Head of caudate nucleus (tissue), 42 donors: ENCODE measurements at regions of chr4 and their contacts with region 1.

Region 1: DNA sequence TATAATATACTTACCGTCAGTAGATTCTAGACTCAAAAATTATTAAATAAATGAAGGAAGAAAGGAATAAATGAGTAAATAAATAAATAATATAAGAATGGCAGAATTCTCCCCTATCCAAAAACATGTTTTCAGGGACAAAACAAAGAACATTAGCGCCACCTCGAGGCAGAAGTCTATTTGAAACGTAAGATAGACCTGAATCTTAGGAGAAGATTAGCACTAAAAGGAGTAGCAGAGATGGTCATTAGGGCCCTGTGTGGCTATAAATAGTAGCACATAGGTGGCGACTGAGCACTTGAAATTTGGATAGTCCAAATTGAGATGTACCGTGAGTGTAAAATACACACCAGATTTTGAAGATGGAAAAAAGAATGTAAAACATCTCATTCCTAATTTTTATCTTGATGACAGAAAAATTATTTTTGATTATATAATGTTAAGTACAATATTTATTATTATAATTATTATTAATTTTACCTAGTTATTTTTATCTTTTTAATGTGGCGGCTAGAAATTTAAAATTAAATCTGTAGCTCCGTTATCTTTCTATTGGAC is 24.3 kb upstream of the SRD5A3 start:
- DNase-seq: peak in 39 of 42 donors; percentile 37 to 96 (median 80)

Region 2: DNA sequence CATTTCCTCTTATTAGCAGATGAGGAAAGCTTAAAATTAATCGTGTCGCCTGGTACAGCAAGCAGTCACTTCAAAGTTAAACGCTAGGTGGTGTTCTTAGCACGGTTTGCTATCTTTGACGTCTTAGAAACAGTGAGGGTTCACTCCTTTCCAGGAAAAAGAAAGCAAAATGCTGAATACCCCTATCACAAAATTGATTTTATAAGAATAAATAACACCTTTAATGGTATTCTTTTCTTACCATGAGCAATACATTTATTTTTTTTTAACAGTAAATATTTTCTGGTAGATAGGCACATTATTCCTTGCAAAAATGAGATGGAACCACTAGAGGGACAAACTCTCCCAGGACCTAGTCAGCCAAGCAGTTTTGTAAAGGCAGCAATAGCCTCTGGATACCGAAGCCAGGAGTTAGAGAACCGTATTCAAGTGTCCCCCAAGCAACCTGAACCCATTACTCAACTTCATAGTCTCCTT is 350.3 kb before region 1 on chr4:
- intact Hi-C with region 1: loop called (anchors 5 kb)
- DNase-seq: peak in 18 of 42 donors; percentile 12 to 68 (median 34)

Region 3: DNA sequence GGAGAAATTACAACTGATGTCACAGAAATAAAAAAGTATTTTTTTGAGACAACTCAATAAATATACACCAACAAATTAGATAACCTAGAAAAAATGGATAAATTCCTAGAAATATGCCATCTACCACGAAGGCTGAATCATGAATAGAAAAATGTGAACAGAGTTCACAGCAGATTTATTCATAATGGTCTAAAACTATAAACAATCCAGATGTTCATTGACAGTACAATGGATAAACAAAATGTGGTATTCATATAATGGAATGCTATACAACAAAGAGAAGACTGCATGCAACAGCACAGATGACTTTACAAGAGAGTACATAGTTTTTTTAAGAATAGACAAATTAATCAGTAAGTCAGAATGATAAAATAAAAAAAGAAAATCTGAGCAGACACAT is 169.7 kb after region 1 on chr4:
- intact Hi-C with region 1: no loop called
- DNase-seq: no peak